ENCODE measurements at regions of chr5 and their contacts with region 1.

Region 1: DNA sequence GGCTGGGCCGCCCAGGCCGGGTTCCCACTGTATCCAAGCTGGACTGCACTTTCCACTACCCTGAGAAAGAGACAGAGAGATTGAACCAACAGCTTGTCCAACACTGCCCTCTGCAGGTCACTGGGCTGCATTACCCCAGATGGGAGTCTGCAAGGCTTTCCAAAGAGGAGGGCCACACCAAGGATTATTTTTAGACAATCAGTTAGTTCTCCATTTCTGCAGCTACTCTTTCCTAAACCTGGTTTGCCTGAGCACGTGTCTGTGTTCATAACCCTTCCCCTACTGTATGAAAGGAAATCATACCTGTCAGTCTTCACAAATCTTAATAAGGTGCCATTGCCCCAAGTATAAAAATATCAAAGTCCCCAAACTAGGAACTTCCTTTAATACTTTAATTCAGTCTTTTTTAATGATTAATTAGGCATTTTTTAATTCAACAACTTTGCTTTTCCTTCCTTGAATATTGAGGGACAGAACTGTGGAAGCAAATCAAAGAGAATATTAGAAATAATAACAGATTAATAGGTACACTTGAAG is 13.4 kb upstream of the FGF1 start:
- DNase-seq: no peak
- H3K4me3 ChIP-seq: no peak overlapping the region
- H3K27me3 ChIP-seq: no peaks in the 10 kb centered on the region
- CTCF ChIP-seq: peak; percentile 95

Region 2: DNA sequence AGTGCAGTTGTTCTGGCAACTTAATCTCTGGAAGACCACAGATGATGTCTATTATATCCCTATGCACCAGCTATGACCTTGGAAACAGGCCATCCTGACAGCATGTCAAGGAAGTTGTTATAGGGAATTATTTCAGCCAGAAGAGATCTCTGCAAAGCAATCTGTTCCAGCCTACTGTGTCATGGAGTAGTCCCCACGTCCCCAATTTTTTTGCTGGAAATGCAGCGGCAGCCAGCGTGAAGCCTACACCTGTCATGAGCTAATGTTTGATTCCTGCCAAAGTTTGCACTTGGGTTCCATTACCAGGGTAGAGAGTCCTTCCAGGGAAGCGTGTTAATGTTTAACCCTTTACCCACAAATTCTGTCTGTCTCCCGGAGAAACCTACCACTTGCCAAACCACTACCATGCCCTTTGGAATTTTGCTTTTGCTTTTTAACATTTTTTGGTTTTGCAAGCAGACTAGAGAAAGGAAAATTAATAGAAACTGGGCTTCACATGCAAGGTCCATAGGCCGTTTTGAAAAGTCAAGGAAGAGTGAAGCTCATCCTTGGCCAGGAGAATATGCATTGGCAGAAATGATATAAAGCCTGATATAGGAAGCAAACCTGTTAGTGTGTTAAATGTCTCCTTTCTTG is 199.5 kb before region 1 on chr5:
- CTCF ChIA-PET with region 1: no interaction called
- POLR2A ChIA-PET with region 1: no interaction called
- DNase-seq: no peak
- H3K4me3 ChIP-seq: no peak overlapping the region
- H3K27me3 ChIP-seq: no peaks in the 10 kb centered on the region
- CTCF ChIP-seq: no peak

Region 3: DNA sequence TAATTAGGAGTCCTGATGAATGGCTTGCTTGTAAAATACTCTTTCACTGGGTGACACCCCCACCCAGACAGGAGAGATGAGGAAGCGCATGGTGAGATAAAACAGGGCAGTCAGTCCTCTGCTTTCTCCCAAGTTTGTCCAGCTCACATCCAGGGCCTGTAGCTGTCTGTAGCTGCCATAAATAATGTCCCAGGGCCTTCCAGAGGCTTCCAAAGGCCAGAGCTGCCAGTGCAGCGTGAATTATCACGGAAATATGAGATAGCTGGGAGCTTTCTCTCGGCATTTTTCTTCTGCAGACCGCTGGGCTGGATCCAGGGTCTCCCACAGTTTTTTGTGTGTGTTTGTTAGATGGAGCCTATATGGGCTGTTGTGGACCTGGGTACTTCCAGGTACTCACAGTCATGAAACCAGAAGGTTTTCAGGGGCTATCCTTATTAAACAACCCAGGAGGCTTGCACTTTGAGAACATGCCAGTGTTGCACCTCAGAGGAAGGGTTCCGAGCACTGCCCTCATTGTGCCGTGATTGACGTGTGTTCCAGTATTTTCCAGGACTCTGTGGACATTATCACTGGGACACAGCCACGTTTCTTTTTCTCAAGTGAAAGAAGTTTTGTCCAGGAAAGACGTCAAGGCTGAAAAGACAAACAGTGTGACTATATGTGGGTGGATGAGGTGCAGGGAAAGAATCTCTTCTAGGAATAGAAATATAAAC is 130.8 kb before region 1 on chr5:
- CTCF ChIA-PET with region 1: no interaction called
- POLR2A ChIA-PET with region 1: no interaction called
- DNase-seq: no peak
- H3K4me3 ChIP-seq: no peak overlapping the region
- H3K27me3 ChIP-seq: no peaks in the 10 kb centered on the region
- CTCF ChIP-seq: no peak

Region 4: DNA sequence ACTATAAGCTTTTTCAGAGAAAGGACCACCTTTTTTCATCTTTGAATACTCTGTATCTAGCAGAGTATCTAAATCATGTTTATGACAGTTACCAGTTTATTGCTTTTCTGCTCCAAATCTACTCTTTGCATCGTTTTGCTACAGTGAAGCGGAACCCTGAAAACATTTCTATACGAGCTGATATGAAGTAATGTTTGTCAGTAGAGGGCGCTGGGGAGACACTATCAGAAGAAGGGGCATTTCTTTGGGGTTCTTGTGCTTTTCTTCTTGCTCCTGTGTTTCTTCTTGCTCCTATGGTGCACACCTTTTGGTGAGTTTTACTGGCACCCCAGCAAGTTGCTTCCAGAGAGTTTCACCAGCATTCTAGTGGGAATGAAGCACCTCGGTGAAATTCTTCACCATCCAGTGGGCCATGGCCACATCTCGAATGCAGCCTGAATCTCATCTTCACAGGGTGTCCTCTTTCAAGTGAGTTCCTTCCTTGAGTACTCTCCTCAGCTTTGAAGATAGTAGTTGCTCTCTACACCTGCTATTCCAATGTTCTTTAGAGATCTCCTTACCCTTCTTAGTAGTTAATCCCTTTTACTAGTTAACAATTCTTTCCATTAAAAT is 111.8 kb before region 1 on chr5:
- CTCF ChIA-PET with region 1: interaction called, 30 read pairs
- POLR2A ChIA-PET with region 1: no interaction called
- DNase-seq: no peak
- H3K4me3 ChIP-seq: no peak overlapping the region
- H3K27me3 ChIP-seq: no peaks in the 10 kb centered on the region
- CTCF ChIP-seq: peak; percentile 60

Region 5: DNA sequence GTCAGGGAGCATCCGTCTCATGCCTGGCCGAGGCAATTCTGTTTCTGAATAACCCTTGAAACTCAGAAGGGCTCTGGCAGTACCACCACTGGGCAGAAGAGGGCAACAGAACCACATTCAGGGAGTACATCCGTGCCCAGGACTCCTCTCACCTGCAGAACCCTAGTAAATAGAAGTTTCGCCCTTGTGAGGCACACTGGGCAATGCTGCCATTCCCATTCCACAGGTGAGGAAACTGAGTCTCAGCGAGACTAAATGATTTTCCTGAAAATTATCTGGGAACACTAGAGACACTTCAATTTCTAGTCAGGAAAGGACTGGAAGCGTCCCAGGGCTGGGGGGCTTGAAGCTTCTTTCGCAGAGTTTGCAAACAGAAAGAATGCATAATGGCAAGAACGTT is 88.1 kb before region 1 on chr5:
- CTCF ChIA-PET with region 1: interaction called, 162 read pairs
- POLR2A ChIA-PET with region 1: no interaction called
- DNase-seq: no peak
- H3K4me3 ChIP-seq: no peak overlapping the region
- H3K27me3 ChIP-seq: no peaks in the 10 kb centered on the region
- CTCF ChIP-seq: peak; percentile 96

Region 6: GRCh38 chr5:142627383-142628255 is 71.6 kb before region 1 on chr5:
- CTCF ChIA-PET with region 1: interaction called, 11 read pairs
- POLR2A ChIA-PET with region 1: no interaction called
- DNase-seq: no peak
- H3K4me3 ChIP-seq: no peak overlapping the region
- H3K27me3 ChIP-seq: no peaks in the 10 kb centered on the region
- CTCF ChIP-seq: no peak

Region 7: GRCh38 chr5:142655339-142656267 is 43.6 kb before region 1 on chr5:
- CTCF ChIA-PET with region 1: interaction called, 385 read pairs
- POLR2A ChIA-PET with region 1: interaction called, 9 read pairs
- DNase-seq: no peak
- H3K4me3 ChIP-seq: no peak overlapping the region
- H3K27me3 ChIP-seq: no peaks in the 10 kb centered on the region
- CTCF ChIP-seq: peak; percentile 100

Region 8: GRCh38 chr5:142674531-142675469 is 24.5 kb before region 1 on chr5:
- CTCF ChIA-PET with region 1: interaction called, 44 read pairs
- POLR2A ChIA-PET with region 1: no interaction called
- DNase-seq: peak; percentile 56
- H3K4me3 ChIP-seq: no peak overlapping the region
- H3K27me3 ChIP-seq: no peaks in the 10 kb centered on the region
- CTCF ChIP-seq: no peak

Region 9: DNA sequence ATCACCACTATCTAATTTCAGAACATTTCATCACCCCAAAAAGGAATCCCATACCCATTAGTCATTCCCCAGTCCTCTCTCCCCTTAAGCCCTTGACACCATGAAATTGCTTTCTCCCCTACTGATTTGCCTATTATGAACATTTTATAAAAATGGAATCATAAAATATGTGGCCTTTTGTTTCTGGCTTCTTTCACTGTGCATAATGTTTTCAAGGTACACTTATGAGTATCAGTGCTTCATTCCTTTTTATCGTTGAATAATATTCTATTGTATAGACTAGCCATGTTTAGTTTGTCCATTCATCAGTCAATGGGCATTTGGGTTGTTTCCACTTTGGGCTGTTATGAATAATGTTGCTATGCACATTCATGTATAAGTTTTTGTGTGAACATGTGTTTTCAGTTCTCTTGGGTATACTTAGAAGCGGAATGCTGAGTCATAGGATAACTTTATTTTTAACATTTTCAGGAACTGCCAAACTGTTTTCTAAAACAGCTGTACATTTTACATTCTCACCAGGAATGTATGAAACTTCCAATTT is 27.0 kb after region 1 on chr5:
- CTCF ChIA-PET with region 1: no interaction called
- POLR2A ChIA-PET with region 1: no interaction called
- DNase-seq: peak; percentile 77
- H3K4me3 ChIP-seq: no peak overlapping the region
- H3K27me3 ChIP-seq: no peaks in the 10 kb centered on the region
- CTCF ChIP-seq: no peak

Region 10: GRCh38 chr5:142807372-142807911 is 108.2 kb after region 1 on chr5:
- CTCF ChIA-PET with region 1: no interaction called
- POLR2A ChIA-PET with region 1: no interaction called
- DNase-seq: no peak
- H3K4me3 ChIP-seq: no peak overlapping the region
- H3K27me3 ChIP-seq: peaks cover 2% of the 10 kb centered on the region; the same call in 1 of the 2 replicates
- CTCF ChIP-seq: no peak